T-cell (primary cell): ENCODE measurements at regions of chr14 and their contacts with region 1.

Region 1: GRCh38 chr14:96686126-96686525 is 111.1 kb upstream of the VRK1 start:
- DNase-seq: no peak
- ATAC-seq: no peak
- H3K4me3 ChIP-seq: no peak overlapping the region
- H3K4me3 Mint-ChIP-seq: no peak overlapping the region
- H3K27ac ChIP-seq: no peak overlapping the region
- H3K27ac Mint-ChIP-seq: no peak overlapping the region
- H3K4me1 ChIP-seq: no peaks in the 10 kb centered on the region
- H3K4me1 Mint-ChIP-seq: no peaks in the 10 kb centered on the region
- H3K27me3 ChIP-seq: peaks cover 0 to 18% of the 10 kb centered on the region in 2 experiments
- H3K27me3 Mint-ChIP-seq: peaks cover 19 to 21% of the 10 kb centered on the region in 2 donors

Region 2: DNA sequence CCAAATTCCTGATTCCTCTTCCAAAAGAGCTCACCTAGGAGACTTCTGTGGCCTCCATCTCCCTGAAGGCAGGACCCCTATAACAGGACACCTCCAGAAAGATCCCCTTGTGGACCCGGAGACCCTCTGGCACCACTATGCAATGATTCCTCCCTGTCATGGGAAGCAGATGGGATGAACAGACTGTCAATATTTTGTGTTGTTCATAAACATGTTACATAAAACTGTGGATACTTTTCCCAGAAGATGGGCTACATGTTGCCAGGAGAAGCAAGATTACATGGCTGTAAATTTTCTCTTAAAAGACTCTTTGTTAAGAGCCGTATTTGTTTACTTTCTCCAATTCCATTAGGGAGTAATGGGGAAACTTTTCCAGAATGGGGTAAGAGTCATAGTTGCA is 757.4 kb before region 1 on chr14:
- CTCF ChIA-PET with region 1: no interaction called
- POLR2A ChIA-PET with region 1: no interaction called
- DNase-seq: no peak
- ATAC-seq: no peak
- H3K4me3 ChIP-seq: no peak overlapping the region
- H3K4me3 Mint-ChIP-seq: no peak overlapping the region
- H3K27ac ChIP-seq: no peak overlapping the region
- H3K27ac Mint-ChIP-seq: no peak overlapping the region
- H3K4me1 ChIP-seq: no peaks in the 10 kb centered on the region
- H3K4me1 Mint-ChIP-seq: no peaks in the 10 kb centered on the region
- H3K27me3 ChIP-seq: peaks cover 0 to 29% of the 10 kb centered on the region in 2 experiments
- H3K27me3 Mint-ChIP-seq: peaks cover 24 to 25% of the 10 kb centered on the region in 2 donors

Region 3: GRCh38 chr14:96053600-96054381 is 632.3 kb before region 1 on chr14:
- CTCF ChIA-PET with region 1: no interaction called
- POLR2A ChIA-PET with region 1: no interaction called
- DNase-seq: no peak
- ATAC-seq: no peak
- H3K4me3 ChIP-seq: no peak overlapping the region
- H3K4me3 Mint-ChIP-seq: no peak overlapping the region
- H3K27ac ChIP-seq: no peak overlapping the region
- H3K27ac Mint-ChIP-seq: no peak overlapping the region
- H3K4me1 ChIP-seq: no peaks in the 10 kb centered on the region
- H3K4me1 Mint-ChIP-seq: peaks cover 0 to 2% (median 0%) of the 10 kb centered on the region in 3 donors
- H3K27me3 ChIP-seq: peaks cover 2 to 61% of the 10 kb centered on the region in 2 experiments
- H3K27me3 Mint-ChIP-seq: peaks cover 14 to 29% of the 10 kb centered on the region in 2 donors

Region 4: GRCh38 chr14:96455596-96455995 is 230.5 kb before region 1 on chr14:
- CTCF ChIA-PET with region 1: no interaction called
- POLR2A ChIA-PET with region 1: interaction called in 1 of 2 experiments, 10 read pairs
- DNase-seq: no peak
- ATAC-seq: no peak
- H3K4me3 ChIP-seq: no peak overlapping the region
- H3K4me3 Mint-ChIP-seq: no peak overlapping the region
- H3K27ac ChIP-seq: no peak overlapping the region
- H3K27ac Mint-ChIP-seq: no peak overlapping the region
- H3K4me1 ChIP-seq: no peaks in the 10 kb centered on the region
- H3K4me1 Mint-ChIP-seq: no peaks in the 10 kb centered on the region
- H3K27me3 ChIP-seq: peaks cover 0 to 2% of the 10 kb centered on the region in 2 experiments
- H3K27me3 Mint-ChIP-seq: peaks cover 9 to 14% of the 10 kb centered on the region in 2 donors

Region 5: GRCh38 chr14:96754845-96755184 is 68.7 kb after region 1 on chr14:
- CTCF ChIA-PET with region 1: no interaction called
- POLR2A ChIA-PET with region 1: no interaction called
- DNase-seq: no peak
- ATAC-seq: no peak
- H3K4me3 ChIP-seq: no peak overlapping the region
- H3K4me3 Mint-ChIP-seq: no peak overlapping the region
- H3K27ac ChIP-seq: no peak overlapping the region
- H3K27ac Mint-ChIP-seq: no peak overlapping the region
- H3K4me1 ChIP-seq: no peaks in the 10 kb centered on the region
- H3K4me1 Mint-ChIP-seq: no peaks in the 10 kb centered on the region
- H3K27me3 ChIP-seq: peaks cover 0 to 39% of the 10 kb centered on the region in 2 experiments
- H3K27me3 Mint-ChIP-seq: peaks cover 17 to 22% of the 10 kb centered on the region in 2 donors